ENCODE measurements at regions of chr12 and their contacts with region 1.

Region 1: DNA sequence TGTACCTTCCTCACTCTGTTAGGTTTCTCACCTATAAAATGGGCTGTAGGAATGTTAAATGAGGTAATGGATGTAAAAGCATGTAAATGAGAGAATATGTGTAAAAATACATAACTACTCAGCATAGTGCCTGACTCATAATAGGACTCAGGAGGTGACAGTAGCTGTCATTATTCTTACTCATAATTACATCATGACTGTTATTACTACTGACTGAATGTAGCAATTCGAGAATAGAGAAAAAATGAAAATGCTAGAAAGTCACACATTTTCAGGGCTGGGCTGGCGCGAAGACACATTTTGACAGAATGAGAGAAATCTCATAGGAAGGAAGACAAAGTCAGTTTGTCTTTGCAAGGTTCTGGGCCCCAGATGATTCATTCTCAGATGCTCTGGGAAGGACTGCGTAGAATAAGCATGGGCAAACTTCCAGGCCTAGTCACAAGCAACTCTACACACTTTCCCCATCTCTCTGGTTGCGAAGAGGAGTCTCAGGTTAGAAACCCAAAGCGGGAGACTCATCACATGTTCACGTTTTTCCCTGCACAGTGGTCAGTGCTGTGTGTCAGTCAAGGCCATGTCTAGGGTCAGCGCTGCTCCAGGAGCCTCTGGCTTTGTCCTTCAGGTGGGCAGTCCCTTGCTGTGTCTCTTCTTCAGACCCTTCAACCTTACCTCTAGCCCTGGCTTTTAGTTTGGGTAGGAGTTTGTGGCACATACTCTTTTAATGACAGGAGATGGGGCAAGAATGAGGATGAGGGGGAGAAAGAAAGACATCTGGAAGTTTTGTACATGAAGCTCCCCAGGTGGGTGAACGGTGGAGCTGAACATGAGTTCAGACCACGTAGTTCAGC is 8.4 kb downstream of the GPRC5A start:
- DNase-seq: no peak
- H3K4me3 ChIP-seq: peak overlapping the region in 1 of 2 donors; percentile 23
- H3K27ac ChIP-seq: peak overlapping the region; percentile 93 to 96
- H3K4me1 ChIP-seq: peaks cover 5 to 62% of the 10 kb centered on the region in 2 donors
- H3K27me3 ChIP-seq: no peaks in the 10 kb centered on the region
- CTCF ChIP-seq: no peak

Region 2: DNA sequence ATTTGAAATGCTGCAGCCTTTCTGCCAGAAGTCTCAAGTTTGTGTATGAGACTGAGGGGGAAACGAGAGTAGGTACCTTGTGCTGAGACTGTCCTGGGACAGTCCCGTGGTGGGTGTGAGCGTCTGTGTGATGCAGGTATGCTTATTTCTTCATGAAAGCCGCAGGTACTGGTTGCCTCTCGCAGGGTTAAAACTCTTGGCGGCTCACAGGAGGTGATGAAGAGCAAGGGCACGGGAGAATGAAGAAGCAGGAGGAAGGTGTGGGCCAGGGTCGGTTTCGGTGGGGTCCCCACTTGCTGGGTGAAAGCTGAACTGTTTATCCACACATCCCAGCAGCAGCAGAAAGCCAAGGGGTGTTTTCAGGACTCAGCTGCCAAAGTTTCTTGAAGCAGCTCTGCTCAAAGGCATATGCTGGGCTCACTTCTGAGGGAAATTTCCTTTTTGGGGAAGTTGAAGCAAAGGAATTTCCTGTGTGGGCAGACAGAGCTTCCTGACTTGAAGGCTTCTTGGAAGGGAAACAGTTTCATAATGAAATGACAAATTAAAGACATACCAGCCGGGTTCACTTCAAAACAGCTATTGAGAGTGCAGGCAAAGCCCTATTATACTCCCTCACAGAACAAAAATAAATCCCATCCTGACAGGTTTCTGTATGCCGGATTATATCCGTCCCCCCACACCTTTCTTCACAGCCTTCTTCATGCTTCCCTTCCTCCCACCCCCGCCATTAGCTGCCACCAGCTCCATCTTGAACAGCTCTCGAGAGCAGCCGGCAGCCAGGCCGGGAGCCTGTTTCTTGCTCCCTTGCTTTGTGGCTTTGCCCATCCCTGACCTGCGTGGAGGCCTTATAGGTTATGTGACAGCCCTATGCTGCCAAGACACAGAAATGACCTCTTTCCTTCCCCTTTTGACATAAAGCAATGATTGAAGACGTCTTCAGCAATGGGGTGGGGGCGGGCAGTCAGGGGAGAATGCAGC is 1133.6 kb before region 1 on chr12:
- intact Hi-C with region 1: loop called (anchors 10 kb)
- DNase-seq: peak in 1 of 2 donors; percentile 81
- H3K4me3 ChIP-seq: peak overlapping the region in 1 of 2 donors; percentile 17
- H3K27ac ChIP-seq: peak overlapping the region; percentile 89
- H3K4me1 ChIP-seq: peaks cover 21 to 62% of the 10 kb centered on the region in 2 donors
- H3K27me3 ChIP-seq: no peaks in the 10 kb centered on the region
- CTCF ChIP-seq: no peak

Region 3: DNA sequence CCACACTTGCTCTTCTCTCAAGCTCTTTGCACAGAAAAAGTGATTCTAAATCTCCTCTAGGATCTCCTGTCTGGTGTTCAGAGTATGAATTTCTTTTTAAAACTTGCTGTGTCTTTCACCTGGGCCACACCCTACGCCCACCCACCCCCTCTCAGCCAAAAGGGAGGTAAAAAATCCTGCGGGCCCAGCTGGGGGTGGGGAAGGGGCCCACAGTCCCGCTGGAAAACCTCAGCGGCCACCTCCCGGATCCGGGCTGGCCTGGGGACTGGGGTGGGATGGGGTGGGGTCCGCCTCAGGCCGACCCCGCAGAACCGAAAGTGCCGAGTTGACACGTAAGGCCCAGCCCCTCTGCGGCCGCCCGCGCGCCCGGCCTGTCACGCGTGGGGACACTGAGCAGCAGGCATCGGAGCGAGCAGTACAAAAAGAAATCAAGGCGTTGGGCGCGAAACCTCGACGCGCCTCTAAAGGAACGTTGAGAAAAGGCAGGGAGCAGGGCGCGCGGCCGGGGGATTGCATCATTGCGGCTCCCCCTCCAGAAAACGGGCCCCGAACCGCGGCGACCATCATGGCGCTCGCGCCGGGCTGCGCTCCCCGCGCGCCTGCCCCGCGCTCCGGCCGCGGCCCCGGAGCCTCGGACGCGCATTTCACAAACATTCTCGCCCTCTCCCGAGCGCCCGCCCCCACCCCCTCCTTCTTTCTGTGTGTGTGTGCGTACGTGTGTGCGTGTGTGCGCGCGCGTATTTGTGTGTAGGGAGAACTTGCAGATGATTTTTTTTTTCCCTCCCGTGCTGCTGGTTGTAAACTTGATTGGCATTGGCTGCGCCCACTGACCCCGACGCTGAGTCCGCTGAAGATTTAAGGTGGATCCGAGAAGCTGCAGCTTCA is 174.9 kb before region 1 on chr12:
- intact Hi-C with region 1: loop called (anchors 5 kb)
- DNase-seq: peak; percentile 88 to 98
- H3K4me3 ChIP-seq: peak overlapping the region; percentile 70 to 75
- H3K27ac ChIP-seq: peak overlapping the region; percentile 96 to 97
- H3K4me1 ChIP-seq: peaks cover 3 to 25% of the 10 kb centered on the region in 2 donors
- H3K27me3 ChIP-seq: no peaks in the 10 kb centered on the region
- CTCF ChIP-seq: peak in 2 of 3 experiments; percentile 7

Region 4: GRCh38 chr12:12823292-12823691 is 76.5 kb before region 1 on chr12:
- intact Hi-C with region 1: no loop called
- DNase-seq: no peak
- H3K4me3 ChIP-seq: no peak overlapping the region
- H3K27ac ChIP-seq: no peak overlapping the region
- H3K4me1 ChIP-seq: peaks cover 0 to 7% of the 10 kb centered on the region in 2 donors
- H3K27me3 ChIP-seq: no peaks in the 10 kb centered on the region
- CTCF ChIP-seq: no peak

Region 5: DNA sequence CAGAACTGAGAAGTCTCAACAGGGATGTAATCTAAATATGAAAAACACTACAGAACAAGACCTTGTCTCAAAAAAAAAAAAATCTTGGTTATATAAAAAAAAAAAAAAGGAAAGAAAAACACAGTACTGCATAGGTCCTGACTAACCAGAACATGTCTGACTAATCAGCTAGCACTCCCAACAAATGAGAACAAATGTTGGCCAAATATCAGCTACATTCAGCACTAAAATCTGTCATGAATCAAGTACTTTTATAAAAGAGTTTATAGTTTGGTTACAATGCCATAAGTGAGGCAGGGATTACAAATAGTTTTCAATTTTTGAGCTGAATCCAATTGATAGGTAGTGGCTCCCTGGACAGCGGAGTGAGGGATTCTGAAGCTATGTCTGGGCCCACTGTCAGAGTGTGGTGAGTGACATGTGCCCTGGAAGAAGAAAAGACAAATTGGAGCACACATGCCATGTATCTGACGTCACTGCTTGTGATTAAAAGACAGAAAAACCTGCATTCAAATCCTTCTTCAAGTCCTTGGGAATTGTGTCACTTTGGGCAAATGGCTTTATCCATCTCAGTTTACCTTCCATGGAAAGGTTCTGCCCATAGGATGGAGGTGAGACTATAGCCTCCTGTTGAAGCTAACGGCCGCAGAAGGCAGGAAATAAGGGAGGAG is 138.9 kb after region 1 on chr12:
- intact Hi-C with region 1: no loop called
- DNase-seq: no peak
- H3K4me3 ChIP-seq: no peak overlapping the region
- H3K27ac ChIP-seq: peak overlapping the region; percentile 12 to 24
- H3K4me1 ChIP-seq: peaks cover 0 to 2% of the 10 kb centered on the region in 2 donors
- H3K27me3 ChIP-seq: no peaks in the 10 kb centered on the region
- CTCF ChIP-seq: no peak

Region 6: DNA sequence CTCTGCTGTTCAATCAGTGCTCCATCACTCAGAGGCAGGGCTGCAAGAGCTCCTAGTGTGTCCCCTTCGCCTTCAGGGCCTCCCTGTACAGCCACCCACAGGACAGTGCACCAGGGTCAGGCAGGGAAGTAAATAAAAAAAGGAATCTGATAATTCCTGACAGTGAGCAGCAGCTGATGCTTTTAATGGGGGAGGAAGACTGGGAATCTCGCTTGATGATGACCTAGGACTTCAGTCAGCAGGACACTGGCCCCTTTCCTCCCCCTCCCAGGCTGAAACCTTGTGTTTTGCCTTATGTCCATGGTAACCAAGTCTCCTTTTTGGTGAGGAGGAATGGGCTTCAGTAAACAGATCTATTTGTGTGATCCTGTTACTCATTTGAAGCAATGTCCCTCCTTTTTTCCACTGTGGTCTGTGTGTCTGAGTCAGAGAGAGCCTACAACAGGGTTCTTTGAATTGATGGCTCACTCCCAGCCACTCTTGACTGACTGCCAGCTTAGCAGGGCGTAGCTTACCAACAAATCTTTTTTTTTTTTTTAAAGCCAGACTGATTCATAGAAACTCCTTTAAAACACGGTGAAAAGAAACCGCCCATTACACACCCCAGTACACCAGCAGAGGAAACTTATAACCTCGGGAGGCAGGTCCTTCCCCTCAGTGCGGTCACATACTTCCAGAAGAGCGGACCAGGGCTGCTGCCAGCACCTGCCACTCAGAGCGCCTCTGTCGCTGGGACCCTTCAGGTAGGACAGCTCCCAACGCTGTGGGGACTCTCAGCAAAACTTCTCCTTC is 296.6 kb after region 1 on chr12 and contains the start of gene EMP1:
- intact Hi-C with region 1: loop called (anchors 5 kb)
- DNase-seq: peak; percentile 89 to 98
- H3K4me3 ChIP-seq: peak within 1 kb of the TSS; percentile 52 to 71
- H3K27ac ChIP-seq: peak within 1 kb of the TSS; percentile 82 to 85
- H3K4me1 ChIP-seq: peaks cover 3 to 7% of the 10 kb centered on the region in 2 donors
- H3K27me3 ChIP-seq: no peaks in the 10 kb centered on the region
- CTCF ChIP-seq: no peak
- total RNA-seq, gene EMP1: 588 TPM

Measured in ascending aorta (tissue), 2 donors.